AG04449 (cell line): ENCODE measurements at regions of chr1 and their contacts with region 1.

Region 1: DNA sequence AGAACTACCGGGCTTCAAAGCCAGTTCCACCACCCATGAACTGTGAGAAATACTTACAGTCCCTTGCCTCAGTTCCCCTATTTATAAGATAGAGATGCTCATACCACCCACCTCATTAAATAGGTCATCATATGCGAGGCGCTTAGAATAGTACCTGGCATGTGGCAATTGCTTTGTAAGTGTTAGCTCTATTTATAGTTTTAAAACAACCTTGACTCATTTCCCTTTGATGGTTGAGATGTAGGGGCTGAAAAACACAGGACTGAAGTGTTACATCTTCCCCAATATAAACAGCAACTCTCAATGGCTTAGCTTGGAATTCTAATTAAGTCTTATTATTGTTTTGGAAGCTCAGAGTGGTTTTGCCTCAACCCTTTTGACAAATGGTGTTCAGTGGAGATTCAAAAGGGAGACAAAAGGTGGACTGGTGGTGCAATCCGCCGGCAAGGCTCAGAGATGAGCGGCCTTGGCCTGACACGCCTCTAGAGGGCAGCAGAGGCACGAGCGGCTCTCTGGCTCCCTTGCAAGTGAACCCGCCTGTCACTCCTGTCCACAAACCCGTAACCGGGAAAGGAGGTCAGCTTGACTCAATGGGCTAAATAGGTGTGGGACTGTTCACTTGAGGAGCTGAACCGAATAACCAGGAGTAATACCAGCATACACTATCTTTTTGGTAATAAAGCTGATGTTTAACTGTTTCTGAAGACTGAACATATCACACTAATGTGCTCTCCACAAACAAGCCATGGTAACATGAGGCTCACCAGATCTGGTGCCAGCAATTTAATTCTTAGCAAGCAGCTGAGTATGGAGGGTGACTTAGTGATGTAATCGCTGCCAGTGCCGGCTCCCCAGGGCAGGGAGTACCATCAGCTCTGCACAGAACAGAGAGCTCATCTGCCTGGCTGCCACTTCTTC is 19.5 kb upstream of the SMYD2 start:
- DNase-seq: peak; percentile 23
- H3K4me3 ChIP-seq: 0 out of 2 replicates have a peak overlapping the region, but pooled peaks have one; percentile 21
- CTCF ChIP-seq: peak; percentile 97

Region 2: DNA sequence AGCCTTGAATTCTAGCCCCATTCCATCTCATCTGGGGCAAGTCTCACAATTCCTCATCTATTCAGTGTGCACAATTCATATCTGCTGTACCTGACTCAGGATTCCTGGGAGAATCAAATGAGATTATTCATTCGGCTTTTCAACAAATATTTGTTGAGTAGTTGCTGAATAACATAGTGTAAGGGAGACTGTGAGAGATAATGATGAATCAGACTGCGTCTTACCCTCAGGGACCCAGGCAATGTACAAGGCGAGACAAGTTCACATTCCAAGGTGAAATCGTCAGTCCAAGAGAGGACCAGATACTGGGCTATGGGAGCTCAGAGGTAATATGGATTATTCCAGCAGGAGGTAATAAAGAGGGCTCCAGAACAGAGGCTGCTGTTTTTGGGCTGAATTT is 48.3 kb before region 1 on chr1:
- CTCF ChIA-PET with region 1: interaction called, 38 read pairs
- POLR2A ChIA-PET with region 1: no interaction called
- DNase-seq: no peak
- H3K4me3 ChIP-seq: no peak overlapping the region
- CTCF ChIP-seq: no peak

Region 3: DNA sequence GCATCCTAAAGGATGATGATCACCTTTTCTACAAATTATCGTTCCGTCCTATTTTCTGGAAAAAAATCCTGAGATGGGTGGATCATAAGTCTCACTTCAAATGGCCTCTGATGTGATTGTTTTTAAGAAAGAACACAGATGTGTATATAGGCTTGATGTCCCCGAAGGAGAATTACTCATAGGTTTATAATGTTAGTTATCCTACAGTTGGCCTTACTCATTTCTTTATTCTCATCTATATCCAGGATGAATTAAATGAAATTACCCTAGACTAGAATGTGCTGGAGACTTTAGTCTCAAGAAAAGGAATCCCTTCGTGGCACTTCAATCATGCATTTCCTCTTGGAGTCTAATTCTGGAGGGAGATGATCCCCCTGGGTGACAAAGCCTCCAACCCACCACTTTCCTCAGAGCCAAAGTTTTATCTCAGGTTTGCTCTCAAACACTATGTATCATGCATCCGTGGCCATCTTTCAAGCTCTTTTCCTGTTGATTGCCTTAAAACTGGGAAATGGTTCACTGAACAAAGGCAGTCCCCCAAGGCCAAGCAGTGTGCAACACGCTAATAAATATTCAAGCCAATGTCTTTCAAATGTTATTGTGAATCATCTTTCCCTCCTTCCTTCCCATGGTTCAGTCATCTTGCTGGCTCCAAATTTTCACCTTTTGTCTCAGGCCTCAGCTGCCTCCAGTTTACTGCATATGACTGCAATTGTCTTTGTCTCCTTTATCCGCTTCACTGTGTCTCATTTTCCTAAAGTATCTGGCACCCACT is 13.0 kb before region 1 on chr1:
- CTCF ChIA-PET with region 1: interaction called, 96 read pairs
- POLR2A ChIA-PET with region 1: no interaction called
- DNase-seq: no peak
- H3K4me3 ChIP-seq: no peak overlapping the region
- CTCF ChIP-seq: no peak

Region 4: GRCh38 chr1:214296860-214297745 is 35.6 kb after region 1 on chr1:
- CTCF ChIA-PET with region 1: interaction called, 42 read pairs
- POLR2A ChIA-PET with region 1: no interaction called
- DNase-seq: peak; percentile 54
- H3K4me3 ChIP-seq: no peak overlapping the region
- CTCF ChIP-seq: no peak

Region 5: GRCh38 chr1:214321705-214322453 is 60.4 kb after region 1 on chr1:
- CTCF ChIA-PET with region 1: interaction called, 477 read pairs
- POLR2A ChIA-PET with region 1: no interaction called
- DNase-seq: no peak
- H3K4me3 ChIP-seq: no peak overlapping the region
- CTCF ChIP-seq: no peak

Region 6: DNA sequence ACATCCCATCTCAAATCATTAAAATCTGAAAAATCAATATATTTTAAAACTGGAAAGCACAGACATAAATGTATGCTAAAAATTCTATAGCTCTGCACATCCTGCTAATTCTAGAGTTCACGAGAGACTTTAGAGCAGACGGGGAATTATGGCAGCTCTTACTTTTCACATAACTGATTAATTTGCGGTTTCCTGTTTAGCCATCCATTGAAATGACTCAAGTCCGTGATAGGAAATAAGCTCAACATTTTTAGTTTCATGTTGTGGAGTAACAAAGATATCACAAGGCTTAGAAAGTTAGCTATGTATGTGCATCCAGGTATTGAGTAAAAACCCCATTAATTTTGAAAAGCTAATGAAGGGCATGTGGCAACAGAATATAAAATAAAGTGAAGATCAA is 142.7 kb after region 1 on chr1:
- CTCF ChIA-PET with region 1: no interaction called
- POLR2A ChIA-PET with region 1: no interaction called
- DNase-seq: no peak
- H3K4me3 ChIP-seq: no peak overlapping the region
- CTCF ChIP-seq: no peak

Region 7: DNA sequence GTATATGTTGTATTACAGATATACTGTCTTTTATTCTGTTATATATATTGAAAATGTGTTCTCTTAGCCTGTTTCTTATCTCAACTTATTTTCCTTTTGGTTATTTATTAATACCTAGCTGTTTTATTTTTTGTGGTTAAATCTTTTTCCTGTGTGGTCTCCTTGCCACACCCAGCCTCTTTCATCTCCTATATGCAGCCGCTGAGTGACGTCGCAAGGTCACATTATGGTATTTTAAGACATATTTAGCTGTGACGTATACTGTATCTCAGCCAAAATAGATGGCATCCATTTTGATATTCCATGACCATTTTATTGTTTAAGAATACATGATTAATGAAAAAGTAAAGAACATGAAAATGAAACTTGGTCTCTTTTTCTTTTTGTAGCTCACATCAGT is 370.6 kb after region 1 on chr1:
- CTCF ChIA-PET with region 1: interaction called, 23 read pairs
- POLR2A ChIA-PET with region 1: no interaction called
- DNase-seq: no peak
- H3K4me3 ChIP-seq: no peak overlapping the region
- CTCF ChIP-seq: no peak